ENCODE measurements at regions of chr2 and their contacts with region 1.

Region 1: DNA sequence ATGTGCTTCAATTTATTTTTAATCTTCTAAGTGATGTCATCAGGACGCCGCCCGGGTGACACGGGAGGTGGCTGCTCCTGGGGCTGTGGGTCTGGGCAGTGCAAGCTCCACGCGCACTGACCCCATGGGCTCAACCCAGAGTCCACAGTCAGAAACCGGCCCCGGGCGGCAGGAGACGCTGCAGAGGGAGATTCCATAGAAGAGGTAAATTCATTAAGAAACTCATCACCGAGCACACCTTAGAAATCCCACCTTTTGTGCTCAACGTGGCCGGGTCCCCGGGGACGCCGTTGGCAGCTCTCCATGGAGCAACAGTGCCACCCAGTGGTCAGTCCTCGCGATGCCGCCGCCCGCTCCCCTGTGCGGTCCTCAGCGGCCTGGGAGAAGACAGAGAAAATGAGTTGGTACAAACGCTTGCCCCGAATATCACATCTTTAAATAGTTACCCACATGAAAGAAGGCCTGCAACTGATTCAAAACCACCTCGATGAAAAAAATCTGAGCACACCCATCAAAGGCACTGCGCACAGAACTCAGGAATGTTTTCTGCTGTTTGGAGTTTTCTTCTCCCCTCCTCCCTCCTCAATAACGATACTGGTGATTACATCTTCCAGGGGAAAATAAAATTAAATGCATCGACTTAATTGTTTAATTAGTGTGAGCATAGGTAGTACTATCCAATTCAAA is 92.6 kb downstream of the CMPK2 start:
- DNase-seq: peak; percentile 70
- ATAC-seq: peak; percentile 95

Region 2: DNA sequence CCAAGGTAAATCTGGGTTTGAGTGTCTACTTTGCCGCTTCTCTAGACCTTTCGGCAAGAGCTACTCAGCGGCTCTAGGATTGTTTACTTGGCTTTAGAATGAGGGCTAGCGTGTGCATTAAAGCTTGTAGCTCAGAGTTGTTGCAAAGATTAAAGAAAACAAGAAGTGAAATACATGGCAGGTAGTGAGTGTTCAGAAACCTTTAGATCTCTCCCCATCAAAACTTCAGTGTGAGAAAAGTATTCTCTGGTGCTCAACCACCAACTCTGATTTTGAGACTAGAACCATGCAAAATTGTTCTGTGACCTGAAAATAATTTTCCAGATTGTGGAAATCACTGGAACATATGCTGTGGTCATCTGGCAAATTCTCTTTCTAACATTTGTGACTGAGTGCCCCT is 419.5 kb before region 1 on chr2:
- intact Hi-C with region 1: loop called (anchors 2 kb)
- DNase-seq: no peak
- ATAC-seq: no peak

Region 3: GRCh38 chr2:6922201-6922685 is 149.1 kb after region 1 on chr2:
- intact Hi-C with region 1: no loop called
- DNase-seq: no peak
- ATAC-seq: no peak